GM12878 (cell line): ENCODE measurements at regions of chr5 and their contacts with region 1.

Region 1: GRCh38 chr5:140084541-140084940 is 29.4 kb upstream of the PURA start:
- DNase-seq: no peak
- ATAC-seq: peak; percentile 19; the same call in 1 of the 3 replicates
- H3K4me3 ChIP-seq: no peak overlapping the region
- H3K27ac ChIP-seq: no peak overlapping the region
- H3K4me1 ChIP-seq: no peaks in the 10 kb centered on the region
- H3K27me3 ChIP-seq: peaks cover 0 to 7% of the 10 kb centered on the region in 2 experiments
- CTCF ChIP-seq: no peak
- EP300 ChIP-seq: no peak
- POLR2A ChIP-seq: no peak
- RAD21 ChIP-seq: no peak

Region 2: DNA sequence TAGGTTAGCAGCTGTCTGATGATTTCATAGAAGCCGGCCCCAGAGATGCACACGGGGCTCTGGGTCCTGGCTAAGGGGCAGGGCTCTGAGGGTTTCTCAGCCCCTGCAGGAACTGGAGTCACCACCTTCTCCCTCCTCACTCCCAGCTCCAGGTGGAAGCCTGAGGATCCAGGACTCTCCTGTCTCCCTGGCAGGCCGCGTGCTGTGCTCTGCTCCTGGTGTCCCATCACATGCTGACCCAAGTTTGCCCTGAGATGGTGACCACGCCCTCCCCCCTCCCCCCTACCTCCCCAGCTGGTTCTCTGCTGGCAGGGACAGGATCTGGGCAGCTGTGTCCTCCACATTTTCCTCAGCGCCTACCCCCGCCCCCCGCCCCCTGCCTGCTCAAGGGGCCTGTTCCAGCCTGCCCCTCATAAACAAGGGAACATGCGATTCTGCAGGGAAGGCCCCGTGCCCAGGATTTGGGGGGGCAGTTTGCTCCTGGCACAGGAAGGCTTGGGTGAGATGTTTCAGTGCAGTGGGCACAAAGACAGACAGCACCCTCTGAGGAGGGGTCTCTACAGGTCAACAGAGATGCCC is 201.5 kb before region 1 on chr5:
- CTCF ChIA-PET with region 1: no interaction called
- POLR2A ChIA-PET with region 1: no interaction called
- RAD21 ChIA-PET with region 1: no interaction called
- SMC1A ChIA-PET with region 1: no interaction called
- in situ Hi-C with region 1: no loop called
- intact Hi-C with region 1: no loop called
- DNase-seq: no peak
- ATAC-seq: no peak
- H3K4me3 ChIP-seq: no peak overlapping the region
- H3K27ac ChIP-seq: no peak overlapping the region
- H3K4me1 ChIP-seq: peaks cover 4% of the 10 kb centered on the region; the same call in 1 of the 2 replicates
- H3K27me3 ChIP-seq: no peaks in the 10 kb centered on the region
- CTCF ChIP-seq: no peak
- EP300 ChIP-seq: no peak
- POLR2A ChIP-seq: no peak
- RAD21 ChIP-seq: no peak

Region 3: GRCh38 chr5:140107312-140108083 is 23.0 kb after region 1 on chr5:
- CTCF ChIA-PET with region 1: interaction called, 18 read pairs
- POLR2A ChIA-PET with region 1: interaction called, 3 read pairs
- RAD21 ChIA-PET with region 1: interaction called, 6 read pairs
- SMC1A ChIA-PET with region 1: interaction called, 6 read pairs
- in situ Hi-C with region 1: no loop called
- intact Hi-C with region 1: no loop called
- DNase-seq: peak; percentile 68
- ATAC-seq: peak; percentile 89
- H3K4me3 ChIP-seq: peak overlapping the region; percentile 86
- H3K27ac ChIP-seq: peak overlapping the region; percentile 67
- H3K4me1 ChIP-seq: peaks cover 20% of the 10 kb centered on the region
- H3K27me3 ChIP-seq: no peaks in the 10 kb centered on the region
- CTCF ChIP-seq: peak; percentile 6 to 29 (median 27); a peak in 3 of 6 replicates
- EP300 ChIP-seq: no peak
- POLR2A ChIP-seq: peak; percentile 86
- RAD21 ChIP-seq: no peak

Region 4: GRCh38 chr5:140151730-140152597 is 67.4 kb after region 1 on chr5:
- CTCF ChIA-PET with region 1: interaction called, 3 read pairs
- POLR2A ChIA-PET with region 1: no interaction called
- RAD21 ChIA-PET with region 1: interaction called, 4 read pairs
- SMC1A ChIA-PET with region 1: interaction called, 3 read pairs
- in situ Hi-C with region 1: loop called (anchors 5 kb)
- intact Hi-C with region 1: no loop called
- DNase-seq: no peak
- ATAC-seq: no peak
- H3K4me3 ChIP-seq: no peak overlapping the region
- H3K27ac ChIP-seq: no peak overlapping the region
- H3K4me1 ChIP-seq: peaks cover 4% of the 10 kb centered on the region
- H3K27me3 ChIP-seq: no peaks in the 10 kb centered on the region
- CTCF ChIP-seq: no peak
- EP300 ChIP-seq: no peak
- POLR2A ChIP-seq: no peak
- RAD21 ChIP-seq: no peak

Region 5: GRCh38 chr5:141349917-141350619 is 1265.5 kb after region 1 on chr5 and contains the start of gene PCDHGB1:
- CTCF ChIA-PET with region 1: no interaction called
- POLR2A ChIA-PET with region 1: no interaction called
- RAD21 ChIA-PET with region 1: no interaction called
- SMC1A ChIA-PET with region 1: no interaction called
- in situ Hi-C with region 1: no loop called
- intact Hi-C with region 1: no loop called
- DNase-seq: no peak
- ATAC-seq: peak; percentile 48; the same call in 2 of the 3 replicates
- H3K4me3 ChIP-seq: no peak within 1 kb of the TSS
- H3K27ac ChIP-seq: no peak within 1 kb of the TSS
- H3K4me1 ChIP-seq: no peaks in the 10 kb centered on the region
- H3K27me3 ChIP-seq: no peaks in the 10 kb centered on the region
- CTCF ChIP-seq: peak; percentile 21 to 49 (median 30); a peak in 3 of 6 replicates
- EP300 ChIP-seq: no peak
- POLR2A ChIP-seq: no peak
- RAD21 ChIP-seq: peak; percentile 36; the same call in 1 of the 2 replicates
- polyA plus RNA-seq, gene PCDHGB1: not detected